Endothelial cell of umbilical vein (primary cell): ENCODE measurements at regions of chr1 and their contacts with region 1.

Region 1: GRCh38 chr1:112809253-112809684 is 94.1 kb upstream of the PPM1J start:
- DNase-seq: peak; percentile 80
- H3K4me3 ChIP-seq: no peak overlapping the region
- H3K27ac ChIP-seq: no peak overlapping the region
- H3K4me1 ChIP-seq: peaks cover 3% of the 10 kb centered on the region
- H3K27me3 ChIP-seq: no peaks in the 10 kb centered on the region
- CTCF ChIP-seq: peak; percentile 94 to 96
- POLR2A ChIP-seq: no peak

Region 2: GRCh38 chr1:112772781-112773180 is 36.5 kb before region 1 on chr1:
- CTCF ChIA-PET with region 1: no interaction called
- POLR2A ChIA-PET with region 1: no interaction called
- dilution Hi-C with region 1: no loop called
- intact Hi-C with region 1: no loop called
- DNase-seq: no peak
- H3K4me3 ChIP-seq: no peak overlapping the region
- H3K27ac ChIP-seq: no peak overlapping the region
- H3K4me1 ChIP-seq: no peaks in the 10 kb centered on the region
- H3K27me3 ChIP-seq: peaks cover 3 to 4% of the 10 kb centered on the region in 2 experiments
- CTCF ChIP-seq: no peak
- POLR2A ChIP-seq: no peak

Region 3: DNA sequence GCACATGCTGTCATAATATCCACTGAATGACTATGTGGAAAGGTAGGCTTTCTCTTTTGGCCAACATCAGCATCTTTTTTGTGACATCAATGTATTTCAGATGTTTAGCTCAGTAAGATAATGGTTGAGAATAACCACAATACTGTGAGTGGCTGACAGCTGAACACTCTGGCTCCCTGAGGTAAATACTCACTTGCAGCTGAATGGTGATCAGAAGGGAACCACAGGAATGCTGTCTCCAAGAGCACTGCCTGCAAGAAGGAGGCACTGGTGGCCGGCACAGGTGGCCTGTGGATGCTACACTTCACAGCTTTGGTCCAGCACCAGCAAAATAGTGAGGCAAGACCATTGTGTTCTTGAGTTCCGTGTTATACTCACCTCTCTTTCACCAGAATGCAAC is 24.5 kb after region 1 on chr1:
- CTCF ChIA-PET with region 1: interaction called, 5 read pairs
- POLR2A ChIA-PET with region 1: no interaction called
- dilution Hi-C with region 1: no loop called
- intact Hi-C with region 1: loop called (anchors 2 kb)
- DNase-seq: no peak
- H3K4me3 ChIP-seq: no peak overlapping the region
- H3K27ac ChIP-seq: no peak overlapping the region
- H3K4me1 ChIP-seq: no peaks in the 10 kb centered on the region
- H3K27me3 ChIP-seq: no peaks in the 10 kb centered on the region
- CTCF ChIP-seq: no peak
- POLR2A ChIP-seq: no peak

Region 4: GRCh38 chr1:112849425-112850033 is 40.3 kb after region 1 on chr1:
- CTCF ChIA-PET with region 1: interaction called, 11 read pairs
- POLR2A ChIA-PET with region 1: no interaction called
- dilution Hi-C with region 1: no loop called
- intact Hi-C with region 1: no loop called
- DNase-seq: peak; percentile 90
- H3K4me3 ChIP-seq: peak overlapping the region; percentile 28 to 61 (median 59)
- H3K27ac ChIP-seq: peak overlapping the region; percentile 50
- H3K4me1 ChIP-seq: peaks cover 11% of the 10 kb centered on the region
- H3K27me3 ChIP-seq: no peaks in the 10 kb centered on the region
- CTCF ChIP-seq: no peak
- POLR2A ChIP-seq: no peak

Region 5: GRCh38 chr1:112882271-112882744 is 73.0 kb after region 1 on chr1:
- CTCF ChIA-PET with region 1: interaction called, 23 read pairs
- POLR2A ChIA-PET with region 1: no interaction called
- dilution Hi-C with region 1: no loop called
- intact Hi-C with region 1: loop called (anchors 1 kb)
- DNase-seq: no peak
- H3K4me3 ChIP-seq: no peak overlapping the region
- H3K27ac ChIP-seq: no peak overlapping the region
- H3K4me1 ChIP-seq: no peaks in the 10 kb centered on the region
- H3K27me3 ChIP-seq: no peaks in the 10 kb centered on the region
- CTCF ChIP-seq: no peak
- POLR2A ChIP-seq: no peak

Region 6: DNA sequence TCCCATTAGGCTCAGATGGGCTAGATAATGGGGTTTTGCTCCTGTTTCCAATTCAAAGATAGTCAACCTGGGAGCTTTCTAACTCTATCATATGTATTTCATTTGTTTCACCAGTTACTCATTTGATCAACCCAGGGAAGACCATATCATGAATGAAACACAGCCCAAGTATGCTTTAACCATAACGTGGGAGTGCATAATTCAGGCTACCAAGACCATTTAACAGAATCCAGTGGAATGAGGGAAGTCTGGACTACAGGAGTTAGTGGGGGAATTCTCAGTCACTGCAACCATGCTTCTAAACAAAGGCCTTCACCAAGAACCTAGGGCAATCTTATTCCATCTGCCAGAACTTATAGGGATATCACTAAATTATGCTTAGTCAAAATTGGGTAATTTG is 161.7 kb after region 1 on chr1:
- CTCF ChIA-PET with region 1: no interaction called
- POLR2A ChIA-PET with region 1: no interaction called
- dilution Hi-C with region 1: no loop called
- intact Hi-C with region 1: no loop called
- DNase-seq: no peak
- H3K4me3 ChIP-seq: no peak overlapping the region
- H3K27ac ChIP-seq: no peak overlapping the region
- H3K4me1 ChIP-seq: no peaks in the 10 kb centered on the region
- H3K27me3 ChIP-seq: no peaks in the 10 kb centered on the region
- CTCF ChIP-seq: no peak
- POLR2A ChIP-seq: no peak